Lower leg skin (tissue), 4 donors: ENCODE measurements at regions of chr1 and their contacts with region 1.

Region 1: GRCh38 chr1:17606826-17607440 is 67.4 kb downstream of the ARHGEF10L start:
- DNase-seq: peak; percentile 72 to 95
- H3K4me3 ChIP-seq: no peak overlapping the region
- CTCF ChIP-seq: peak in 1 of 3 donors; percentile 91
- POLR2A ChIP-seq: no peak

Region 2: GRCh38 chr1:17419626-17420328 is 187.2 kb before region 1 on chr1:
- intact Hi-C with region 1: loop called (anchors 10 kb)
- DNase-seq: peak in 1 of 2 donors; percentile 91
- H3K4me3 ChIP-seq: no peak overlapping the region
- CTCF ChIP-seq: peak in 1 of 3 donors; percentile 88
- POLR2A ChIP-seq: no peak

Region 3: DNA sequence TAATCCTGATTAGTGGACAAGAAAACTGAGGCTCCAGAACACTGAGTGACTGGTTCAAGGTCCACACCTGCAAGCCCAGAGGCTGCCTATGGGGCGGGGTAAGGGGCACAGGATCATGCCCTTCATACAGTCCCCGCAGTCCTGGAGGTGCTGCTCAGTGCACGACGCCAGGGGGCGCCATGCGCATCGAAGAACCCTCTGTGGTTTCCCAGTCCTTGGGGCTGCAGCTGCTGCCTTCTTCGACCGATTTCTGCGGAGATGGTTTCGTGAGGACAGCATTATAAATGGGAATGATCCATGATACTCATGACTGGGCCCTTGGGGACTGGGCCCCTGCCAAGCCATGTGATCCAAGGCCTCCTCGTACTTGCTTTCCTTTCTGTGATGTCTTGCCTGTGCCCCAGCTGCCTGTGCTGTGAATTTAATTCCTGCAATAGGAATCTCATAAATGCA is 104.6 kb before region 1 on chr1:
- intact Hi-C with region 1: loop called (anchors 5 kb)
- DNase-seq: peak; percentile 89 to 97
- H3K4me3 ChIP-seq: no peak overlapping the region
- CTCF ChIP-seq: peak in 1 of 3 donors; percentile 78
- POLR2A ChIP-seq: no peak